Activated CD8-positive, alpha-beta memory T cell treated with anti-CD3 and anti-CD28 coated beads, Interleukin-2, amount 10 ng/mL, durations not matched to agents 7 days and 5 days (primary cell): ENCODE measurements at regions of chr1 and their contacts with region 1.

Region 1: DNA sequence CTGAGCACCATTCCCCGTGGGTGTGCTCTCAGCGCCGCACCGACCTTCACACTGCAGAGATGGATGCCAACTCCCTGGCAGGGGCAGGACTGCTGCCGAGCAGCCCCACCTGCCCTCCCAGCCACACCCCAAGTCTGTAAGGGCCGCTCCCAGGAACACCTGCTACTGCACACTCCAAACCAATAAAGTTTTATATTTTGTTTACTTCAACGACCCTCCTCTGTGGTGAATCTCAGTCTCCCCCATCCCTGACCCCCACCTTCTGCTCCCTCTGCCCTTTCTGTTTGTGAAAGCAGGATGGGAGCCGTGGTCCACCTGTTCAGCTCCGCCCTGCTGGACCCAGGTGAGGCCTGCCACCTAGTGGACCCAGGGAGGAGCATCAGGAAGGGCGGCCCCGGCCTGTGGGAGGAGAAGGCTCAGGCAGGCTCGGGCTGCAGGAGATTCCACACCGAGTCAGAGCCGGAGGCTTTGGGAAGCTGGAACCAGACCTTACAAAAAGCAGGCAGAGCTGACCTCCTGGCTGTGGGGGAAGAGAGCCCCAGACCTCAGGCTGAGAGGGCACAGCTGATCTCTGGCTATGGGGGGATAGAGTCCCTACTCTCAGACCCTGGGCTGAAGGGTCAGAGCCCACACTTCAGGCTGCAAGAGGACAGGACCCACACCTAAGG is 982 bp upstream of the TMEM82 start:
- DNase-seq: peak; percentile 83
- ATAC-seq: peak; percentile 92
- H3K4me3 Mint-ChIP-seq: no peak overlapping the region
- H3K27ac Mint-ChIP-seq: no peak overlapping the region
- H3K4me1 Mint-ChIP-seq: peaks cover 5% of the 10 kb centered on the region
- H3K27me3 Mint-ChIP-seq: no peaks in the 10 kb centered on the region

Region 2: GRCh38 chr1:15592285-15592684 is 149.0 kb before region 1 on chr1:
- CTCF ChIA-PET with region 1: interaction called, 37 read pairs
- DNase-seq: no peak
- ATAC-seq: no peak
- H3K4me3 Mint-ChIP-seq: no peak overlapping the region
- H3K27ac Mint-ChIP-seq: no peak overlapping the region
- H3K4me1 Mint-ChIP-seq: peaks cover 2% of the 10 kb centered on the region
- H3K27me3 Mint-ChIP-seq: peaks cover 3% of the 10 kb centered on the region

Region 3: GRCh38 chr1:15764269-15764764 is 23.0 kb after region 1 on chr1:
- CTCF ChIA-PET with region 1: no interaction called
- DNase-seq: no peak
- ATAC-seq: no peak
- H3K4me3 Mint-ChIP-seq: no peak overlapping the region
- H3K27ac Mint-ChIP-seq: no peak overlapping the region
- H3K4me1 Mint-ChIP-seq: no peaks in the 10 kb centered on the region
- H3K27me3 Mint-ChIP-seq: peaks cover 36% of the 10 kb centered on the region